ENCODE measurements at regions of chr11 and their contacts with region 1.

Region 1: GRCh38 chr11:74449369-74449931 is 17.9 kb downstream of the KCNE3 start:
- DNase-seq: peak; percentile 35
- H3K4me3 Mint-ChIP-seq: no peak overlapping the region
- H3K27ac Mint-ChIP-seq: no peak overlapping the region
- H3K4me1 Mint-ChIP-seq: no peaks in the 10 kb centered on the region
- H3K27me3 Mint-ChIP-seq: peaks cover 8% of the 10 kb centered on the region

Region 2: GRCh38 chr11:74255741-74256369 is 193.6 kb before region 1 on chr11:
- CTCF ChIA-PET with region 1: interaction called, 86 read pairs
- POLR2A ChIA-PET with region 1: no interaction called
- intact Hi-C with region 1: loop called (anchors 1 kb)
- DNase-seq: peak; percentile 66
- H3K4me3 Mint-ChIP-seq: no peak overlapping the region
- H3K27ac Mint-ChIP-seq: no peak overlapping the region
- H3K4me1 Mint-ChIP-seq: peaks cover 5% of the 10 kb centered on the region
- H3K27me3 Mint-ChIP-seq: no peaks in the 10 kb centered on the region

Region 3: DNA sequence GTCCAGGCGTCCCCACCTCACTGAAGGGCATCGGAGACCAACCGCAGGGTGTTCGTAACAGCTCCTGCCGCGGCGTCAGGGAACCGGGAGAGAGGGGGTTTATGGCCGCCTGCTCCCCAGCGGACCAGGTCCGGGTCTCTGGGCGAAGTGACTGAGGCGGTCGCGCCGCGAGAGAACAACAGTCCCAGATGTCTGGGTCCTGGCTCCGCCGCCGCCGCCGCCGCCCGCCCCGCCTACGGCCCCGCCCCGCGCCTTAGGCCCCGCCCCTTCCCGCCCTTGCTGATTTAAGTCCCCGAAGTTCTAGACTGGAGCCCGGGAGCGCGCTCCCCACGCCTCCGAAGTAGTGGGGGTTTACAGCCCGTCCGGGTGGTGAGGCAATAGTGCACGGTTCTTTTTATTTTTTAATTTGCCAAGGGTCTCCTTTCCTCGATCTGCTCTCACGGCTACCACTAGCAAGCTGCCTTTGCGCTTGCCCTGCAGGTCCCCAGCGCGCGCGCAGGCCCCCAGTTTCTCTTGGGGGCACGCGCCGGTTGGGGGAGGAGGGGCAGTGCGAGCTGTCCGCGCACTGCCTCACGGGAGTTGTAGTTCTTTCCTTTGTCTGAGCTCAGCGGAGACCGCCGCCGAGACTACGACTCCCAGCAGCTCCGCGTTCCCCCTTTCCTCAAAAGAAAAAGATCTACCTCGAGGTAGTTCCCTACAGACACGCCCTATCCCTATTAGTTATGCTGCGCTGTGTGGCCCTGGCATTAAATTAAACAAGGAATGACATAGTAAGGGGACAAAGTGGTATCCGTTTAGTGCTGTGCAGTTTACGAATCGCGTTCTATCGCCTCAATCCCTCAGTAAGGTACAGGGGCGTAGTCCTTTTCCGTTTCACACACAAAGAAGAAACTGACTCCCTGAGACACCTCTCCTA is 50.9 kb before region 1 on chr11 and contains the start of gene PGM2L1:
- CTCF ChIA-PET with region 1: interaction called, 11 read pairs
- POLR2A ChIA-PET with region 1: no interaction called
- intact Hi-C with region 1: no loop called
- DNase-seq: peak; percentile 94
- H3K4me3 Mint-ChIP-seq: peak within 1 kb of the TSS; percentile 90
- H3K27ac Mint-ChIP-seq: peak within 1 kb of the TSS; percentile 94
- H3K4me1 Mint-ChIP-seq: peaks cover 38% of the 10 kb centered on the region
- H3K27me3 Mint-ChIP-seq: no peaks in the 10 kb centered on the region
- total RNA-seq, gene PGM2L1: 7.0 to 7.2 TPM

Region 4: DNA sequence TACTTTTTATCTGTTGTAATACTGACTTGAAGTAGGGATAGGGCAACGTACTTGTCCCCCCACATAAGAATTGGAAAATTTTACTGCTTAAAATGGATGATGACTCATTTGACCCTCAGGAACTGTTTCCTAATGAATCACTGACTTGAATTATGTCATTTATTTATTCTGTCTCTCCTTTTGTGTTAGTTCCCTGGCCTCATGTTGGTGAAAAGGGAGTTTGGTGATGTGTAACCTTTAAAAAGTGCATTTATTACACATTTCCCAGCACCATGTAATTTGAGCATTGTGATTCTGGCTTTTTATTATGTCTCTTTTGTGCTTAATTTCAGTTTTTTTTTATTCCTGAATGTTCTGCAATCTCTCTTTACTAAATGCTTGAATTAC is 30.9 kb before region 1 on chr11:
- CTCF ChIA-PET with region 1: interaction called, 15 read pairs
- POLR2A ChIA-PET with region 1: no interaction called
- intact Hi-C with region 1: no loop called
- DNase-seq: no peak
- H3K4me3 Mint-ChIP-seq: no peak overlapping the region
- H3K27ac Mint-ChIP-seq: no peak overlapping the region
- H3K4me1 Mint-ChIP-seq: peaks cover 20% of the 10 kb centered on the region
- H3K27me3 Mint-ChIP-seq: no peaks in the 10 kb centered on the region

Region 5: DNA sequence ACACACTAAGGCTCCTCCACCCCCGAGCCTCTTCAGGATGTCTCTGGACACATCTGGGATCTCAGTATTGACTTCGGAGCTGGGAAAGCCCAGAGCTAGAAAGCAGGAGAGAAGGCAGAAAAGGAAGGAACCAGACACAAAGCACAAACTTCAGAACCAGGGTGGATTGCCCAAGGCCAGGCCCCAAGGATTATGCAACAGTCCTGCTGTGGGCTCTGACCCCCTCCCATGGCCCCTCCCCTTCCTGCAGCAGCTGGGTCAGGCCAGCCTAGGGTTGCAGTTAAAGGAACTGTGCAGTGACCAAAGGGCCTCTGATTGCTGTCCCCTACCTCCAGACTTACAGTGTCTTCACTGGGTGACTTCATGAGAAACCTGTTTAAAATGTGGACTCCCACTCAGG is 12.6 kb after region 1 on chr11:
- CTCF ChIA-PET with region 1: interaction called, 16 read pairs
- POLR2A ChIA-PET with region 1: no interaction called
- intact Hi-C with region 1: no loop called
- DNase-seq: no peak
- H3K4me3 Mint-ChIP-seq: no peak overlapping the region
- H3K27ac Mint-ChIP-seq: no peak overlapping the region
- H3K4me1 Mint-ChIP-seq: no peaks in the 10 kb centered on the region
- H3K27me3 Mint-ChIP-seq: peaks cover 21% of the 10 kb centered on the region

Region 6: DNA sequence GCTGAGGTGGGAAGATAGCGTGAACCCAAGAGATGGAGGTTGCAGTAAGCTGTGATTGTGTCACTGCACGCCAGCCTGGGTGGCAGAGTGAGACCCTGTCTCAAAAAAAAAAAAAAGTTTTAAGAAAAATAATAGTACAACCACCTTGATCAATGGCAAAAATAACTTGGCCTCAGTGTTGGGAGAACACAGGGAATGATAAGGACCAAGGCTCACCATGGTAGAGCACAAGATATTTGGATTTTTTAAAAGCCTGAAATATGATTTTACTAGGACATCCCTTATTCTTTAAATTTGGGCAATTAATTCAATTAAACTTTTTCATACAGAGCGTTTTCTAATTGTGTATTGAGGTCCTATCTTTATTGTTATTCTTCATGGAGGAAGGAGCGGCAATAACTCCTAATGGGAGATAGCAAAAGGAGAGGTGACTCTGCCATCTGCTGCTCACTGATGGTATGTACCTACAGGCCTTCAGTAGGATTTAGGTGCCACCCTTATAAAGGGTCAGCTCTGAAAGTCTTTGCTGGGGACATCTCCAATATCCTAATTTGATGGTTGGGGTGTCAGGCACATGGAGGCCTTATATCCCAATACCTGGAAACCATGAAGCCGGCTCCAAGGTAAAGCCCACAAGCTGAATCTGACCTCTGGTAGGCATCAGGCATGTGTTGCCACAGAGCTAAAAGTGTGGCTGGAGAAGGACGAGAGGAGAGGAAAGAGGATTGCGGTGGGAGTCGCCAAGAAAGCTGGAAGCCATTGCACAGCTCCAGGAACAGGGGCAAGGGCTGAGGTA is 121.0 kb after region 1 on chr11:
- CTCF ChIA-PET with region 1: interaction called, 144 read pairs
- POLR2A ChIA-PET with region 1: no interaction called
- intact Hi-C with region 1: loop called (anchors 1 kb)
- DNase-seq: peak; percentile 46
- H3K4me3 Mint-ChIP-seq: no peak overlapping the region
- H3K27ac Mint-ChIP-seq: no peak overlapping the region
- H3K4me1 Mint-ChIP-seq: no peaks in the 10 kb centered on the region
- H3K27me3 Mint-ChIP-seq: peaks cover 11% of the 10 kb centered on the region

Measured in activated CD4-positive, alpha-beta memory T cell treated with anti-CD3 and anti-CD28 coated beads for 36 hours (primary cell).